ENCODE measurements at regions of chr18 and their contacts with region 1.

Region 1: DNA sequence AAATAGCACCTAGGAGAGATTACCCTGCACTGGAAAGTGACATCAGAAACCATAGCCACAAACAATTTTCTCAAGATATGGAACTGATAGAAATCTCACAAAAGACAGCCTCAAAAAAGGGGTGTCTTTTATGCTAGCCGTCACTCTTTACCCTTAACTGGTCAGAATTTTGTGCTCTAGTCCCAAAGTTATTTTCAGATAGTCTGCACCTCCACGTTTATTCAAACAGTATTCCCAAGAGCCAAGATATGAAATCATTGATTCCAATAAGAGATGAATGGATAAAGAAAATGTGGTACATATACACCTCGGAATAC is 23.5 kb upstream of the PMAIP1 start:
- DNase-seq: peak; percentile 86
- ATAC-seq: peak; percentile 79
- H3K4me3 ChIP-seq: peak overlapping the region; percentile 56; the same call in 1 of the 2 replicates
- H3K27ac ChIP-seq: peak overlapping the region; percentile 87
- H3K4me1 ChIP-seq: peaks cover 59% of the 10 kb centered on the region
- H3K27me3 ChIP-seq: no peaks in the 10 kb centered on the region
- CTCF ChIP-seq: no peak
- EP300 ChIP-seq: peak in 1 of 2 experiments; percentile 77; a peak in 3 of 4 replicates
- POLR2A ChIP-seq: no peak
- RAD21 ChIP-seq: no peak

Region 2: GRCh38 chr18:59861963-59862819 is 14.1 kb before region 1 on chr18:
- CTCF ChIA-PET with region 1: interaction called, 4 read pairs
- POLR2A ChIA-PET with region 1: interaction called, 8 read pairs
- RAD21 ChIA-PET with region 1: interaction called, 4 read pairs
- SMC1A ChIA-PET with region 1: interaction called, 29 read pairs
- in situ Hi-C with region 1: no loop called
- intact Hi-C with region 1: no loop called
- DNase-seq: peak; percentile 61
- ATAC-seq: peak; percentile 94
- H3K4me3 ChIP-seq: no peak overlapping the region
- H3K27ac ChIP-seq: peak overlapping the region; percentile 71
- H3K4me1 ChIP-seq: peaks cover 16% of the 10 kb centered on the region
- H3K27me3 ChIP-seq: no peaks in the 10 kb centered on the region
- CTCF ChIP-seq: no peak
- EP300 ChIP-seq: no peak
- POLR2A ChIP-seq: no peak
- RAD21 ChIP-seq: no peak